Mammary epithelial cell (primary cell): ENCODE measurements at regions of chr7 and their contacts with region 1.

Region 1: DNA sequence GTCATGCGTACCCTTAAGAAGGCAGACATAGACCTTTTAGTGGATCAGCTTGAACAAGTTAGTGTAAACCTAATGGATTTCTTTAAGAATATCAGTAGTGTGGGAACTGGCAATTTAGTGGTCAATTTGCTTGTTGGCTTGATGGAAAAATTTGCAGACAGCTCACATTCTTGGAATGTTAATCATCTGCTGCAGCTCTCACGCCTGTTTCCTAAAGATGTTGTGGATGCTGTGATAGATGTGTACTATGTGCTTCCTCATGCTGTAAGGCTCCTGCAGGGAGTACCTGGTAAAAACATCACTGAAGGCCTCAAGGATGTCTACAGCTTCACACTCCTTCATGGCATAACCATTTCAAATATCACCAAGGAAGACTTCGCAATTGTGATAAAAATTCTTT is 103.4 kb downstream of the ABCA13 start:
- DNase-seq: peak; percentile 63
- H3K4me3 ChIP-seq: no peak overlapping the region
- H3K27ac ChIP-seq: no peak overlapping the region
- H3K4me1 ChIP-seq: peaks cover 16% of the 10 kb centered on the region
- H3K27me3 ChIP-seq: no peaks in the 10 kb centered on the region
- CTCF ChIP-seq: no peak

Region 2: GRCh38 chr7:48285373-48285772 is 10.7 kb after region 1 on chr7:
- CTCF ChIA-PET with region 1: interaction called, 12 read pairs
- dilution Hi-C with region 1: no loop called
- in situ Hi-C with region 1: no loop called
- intact Hi-C with region 1: no loop called
- DNase-seq: peak; percentile 63
- H3K4me3 ChIP-seq: no peak overlapping the region
- H3K27ac ChIP-seq: no peak overlapping the region
- H3K4me1 ChIP-seq: peaks cover 12% of the 10 kb centered on the region
- H3K27me3 ChIP-seq: no peaks in the 10 kb centered on the region
- CTCF ChIP-seq: no peak